Activated CD4-positive, alpha-beta T cell treated with anti-CD3 and anti-CD28 coated beads, Interleukin-2, amount 10 ng/mL, durations not matched to agents 24 days and 14 days (primary cell): ENCODE measurements at regions of chr10 and their contacts with region 1.

Region 1: GRCh38 chr10:132616170-132616995 is 78.8 kb downstream of the INPP5A start:
- DNase-seq: peak; percentile 86
- H3K4me3 Mint-ChIP-seq: peak overlapping the region; percentile 48
- H3K27ac Mint-ChIP-seq: peak overlapping the region; percentile 89
- H3K4me1 Mint-ChIP-seq: peaks cover 21% of the 10 kb centered on the region
- H3K27me3 Mint-ChIP-seq: peaks cover 10% of the 10 kb centered on the region

Region 2: GRCh38 chr10:132571650-132572535 is 44.5 kb before region 1 on chr10:
- intact Hi-C with region 1: loop called (anchors 1 kb)
- DNase-seq: peak; percentile 90
- H3K4me3 Mint-ChIP-seq: no peak overlapping the region
- H3K27ac Mint-ChIP-seq: peak overlapping the region; percentile 84
- H3K4me1 Mint-ChIP-seq: peaks cover 15% of the 10 kb centered on the region
- H3K27me3 Mint-ChIP-seq: no peaks in the 10 kb centered on the region

Region 3: GRCh38 chr10:132588301-132589013 is 27.9 kb before region 1 on chr10:
- intact Hi-C with region 1: loop called (anchors 1 kb)
- DNase-seq: peak; percentile 81
- H3K4me3 Mint-ChIP-seq: peak overlapping the region; percentile 44
- H3K27ac Mint-ChIP-seq: peak overlapping the region; percentile 60
- H3K4me1 Mint-ChIP-seq: peaks cover 35% of the 10 kb centered on the region
- H3K27me3 Mint-ChIP-seq: no peaks in the 10 kb centered on the region

Region 4: GRCh38 chr10:132599732-132600131 is 16.7 kb before region 1 on chr10:
- intact Hi-C with region 1: no loop called
- DNase-seq: no peak
- H3K4me3 Mint-ChIP-seq: no peak overlapping the region
- H3K27ac Mint-ChIP-seq: no peak overlapping the region
- H3K4me1 Mint-ChIP-seq: peaks cover 4% of the 10 kb centered on the region
- H3K27me3 Mint-ChIP-seq: peaks cover 4% of the 10 kb centered on the region

Region 5: GRCh38 chr10:132654702-132655661 is 38.6 kb after region 1 on chr10:
- intact Hi-C with region 1: no loop called
- DNase-seq: peak; percentile 84
- H3K4me3 Mint-ChIP-seq: no peak overlapping the region
- H3K27ac Mint-ChIP-seq: no peak overlapping the region
- H3K4me1 Mint-ChIP-seq: no peaks in the 10 kb centered on the region
- H3K27me3 Mint-ChIP-seq: no peaks in the 10 kb centered on the region